Activated CD8-positive, alpha-beta T cell treated with anti-CD3 and anti-CD28 coated beads, Interleukin-2, amount 10 ng/mL, durations not matched to agents 7 days and 5 days (primary cell): ENCODE measurements at regions of chr3 and their contacts with region 1.

Region 1: GRCh38 chr3:46629551-46630517 is 17.5 kb downstream of the FAM240A start:
- DNase-seq: peak; percentile 85
- ATAC-seq: peak; percentile 100
- H3K4me3 Mint-ChIP-seq: peak overlapping the region; percentile 37
- H3K27ac Mint-ChIP-seq: no peak overlapping the region
- H3K4me1 Mint-ChIP-seq: peaks cover 17% of the 10 kb centered on the region
- H3K27me3 Mint-ChIP-seq: peaks cover 3% of the 10 kb centered on the region

Region 2: DNA sequence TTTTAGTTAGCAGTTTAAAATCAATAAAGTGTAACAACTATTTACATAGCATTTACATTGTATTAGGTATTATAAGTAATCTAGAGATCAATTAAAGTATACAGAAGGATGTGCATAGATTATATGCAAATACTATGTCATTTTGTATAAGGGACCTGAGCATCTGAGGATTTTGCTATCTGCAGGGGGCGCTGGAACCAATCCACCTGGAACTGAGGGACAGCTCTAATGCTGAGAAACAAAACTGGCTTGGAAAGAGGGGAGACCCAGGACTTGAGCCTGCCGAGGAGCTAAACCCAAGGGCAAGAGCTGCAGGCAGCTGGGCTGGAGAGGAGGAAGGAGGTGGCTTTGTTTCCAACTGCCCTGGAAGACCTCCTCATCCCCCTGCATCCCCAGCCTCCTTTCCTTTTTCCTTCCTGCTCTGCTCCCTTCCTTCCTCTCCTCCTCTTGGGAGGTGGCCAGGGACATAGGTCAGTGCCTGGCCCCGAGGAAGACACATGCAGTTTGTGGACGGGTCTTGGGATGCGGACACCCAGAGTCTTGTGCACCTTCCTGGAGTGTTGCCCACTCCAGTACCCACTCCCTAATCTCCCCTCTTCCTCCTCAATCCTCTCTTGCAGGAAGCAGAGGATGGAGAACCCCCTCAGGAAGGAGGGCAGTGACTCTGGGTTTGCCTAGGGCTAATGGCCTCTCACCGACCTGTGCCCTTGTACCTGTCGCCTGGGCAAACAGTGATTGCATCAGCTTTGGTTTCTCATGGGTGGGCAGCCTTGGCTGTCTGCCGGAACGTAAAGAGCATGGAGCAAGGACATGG is 132.9 kb before region 1 on chr3:
- CTCF ChIA-PET with region 1: interaction called, 18 read pairs
- POLR2A ChIA-PET with region 1: no interaction called
- DNase-seq: peak; percentile 64
- ATAC-seq: no peak
- H3K4me3 Mint-ChIP-seq: no peak overlapping the region
- H3K27ac Mint-ChIP-seq: no peak overlapping the region
- H3K4me1 Mint-ChIP-seq: peaks cover 2% of the 10 kb centered on the region
- H3K27me3 Mint-ChIP-seq: no peaks in the 10 kb centered on the region

Region 3: GRCh38 chr3:46527239-46527638 is 102.6 kb before region 1 on chr3:
- CTCF ChIA-PET with region 1: interaction called, 10 read pairs
- POLR2A ChIA-PET with region 1: no interaction called
- DNase-seq: no peak
- ATAC-seq: no peak
- H3K4me3 Mint-ChIP-seq: no peak overlapping the region
- H3K27ac Mint-ChIP-seq: no peak overlapping the region
- H3K4me1 Mint-ChIP-seq: no peaks in the 10 kb centered on the region
- H3K27me3 Mint-ChIP-seq: peaks cover 18% of the 10 kb centered on the region

Region 4: GRCh38 chr3:46538803-46539442 is 90.9 kb before region 1 on chr3:
- CTCF ChIA-PET with region 1: interaction called, 17 read pairs
- POLR2A ChIA-PET with region 1: no interaction called
- DNase-seq: peak; percentile 93
- ATAC-seq: peak; percentile 97
- H3K4me3 Mint-ChIP-seq: peak overlapping the region; percentile 66
- H3K27ac Mint-ChIP-seq: peak overlapping the region; percentile 89
- H3K4me1 Mint-ChIP-seq: peaks cover 61% of the 10 kb centered on the region
- H3K27me3 Mint-ChIP-seq: peaks cover 11% of the 10 kb centered on the region

Region 5: DNA sequence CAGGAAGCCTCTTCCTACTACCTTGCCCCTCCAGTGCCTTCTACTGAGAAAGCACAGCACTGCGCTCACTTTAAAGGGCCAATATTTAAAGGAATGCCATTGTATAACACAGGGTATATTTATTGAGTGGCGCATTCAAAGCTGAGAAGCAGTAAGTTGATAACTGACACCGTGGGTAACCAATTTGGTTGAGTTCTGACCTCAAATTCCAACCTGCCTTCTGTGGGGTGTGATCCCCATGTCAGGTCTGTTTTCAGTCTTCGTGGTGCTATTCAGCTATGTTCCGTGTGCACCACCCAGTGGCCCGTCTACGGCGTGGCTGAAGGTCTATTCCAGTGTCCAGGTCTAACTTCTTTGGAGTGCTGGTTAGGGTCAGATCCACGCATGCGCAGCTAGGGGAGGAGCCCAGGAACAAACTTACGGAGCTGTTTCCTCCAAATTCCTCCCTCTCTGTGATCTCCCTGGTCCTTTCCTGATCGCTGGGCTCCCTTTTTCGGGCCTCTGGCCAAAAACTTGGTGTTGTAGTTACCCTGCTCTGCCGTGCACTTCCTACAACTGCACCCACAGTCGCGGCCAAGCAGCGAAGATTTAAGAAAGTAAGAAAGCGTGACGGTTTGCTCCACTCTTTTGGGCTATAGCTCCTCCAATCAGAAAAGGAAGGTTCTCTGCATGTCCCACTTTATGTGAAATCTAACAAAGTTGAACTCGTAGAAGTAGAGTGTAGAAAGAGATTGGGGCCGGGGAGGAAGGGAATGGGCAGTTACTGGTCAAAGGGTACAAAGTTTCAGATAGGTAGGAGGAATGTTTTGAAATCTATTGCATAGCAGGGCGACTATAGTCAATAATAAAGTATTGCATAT is 71.4 kb before region 1 on chr3:
- CTCF ChIA-PET with region 1: interaction called, 21 read pairs
- POLR2A ChIA-PET with region 1: no interaction called
- DNase-seq: peak; percentile 84
- ATAC-seq: peak; percentile 100
- H3K4me3 Mint-ChIP-seq: peak overlapping the region; percentile 77
- H3K27ac Mint-ChIP-seq: peak overlapping the region; percentile 63
- H3K4me1 Mint-ChIP-seq: peaks cover 26% of the 10 kb centered on the region
- H3K27me3 Mint-ChIP-seq: peaks cover 44% of the 10 kb centered on the region

Region 6: DNA sequence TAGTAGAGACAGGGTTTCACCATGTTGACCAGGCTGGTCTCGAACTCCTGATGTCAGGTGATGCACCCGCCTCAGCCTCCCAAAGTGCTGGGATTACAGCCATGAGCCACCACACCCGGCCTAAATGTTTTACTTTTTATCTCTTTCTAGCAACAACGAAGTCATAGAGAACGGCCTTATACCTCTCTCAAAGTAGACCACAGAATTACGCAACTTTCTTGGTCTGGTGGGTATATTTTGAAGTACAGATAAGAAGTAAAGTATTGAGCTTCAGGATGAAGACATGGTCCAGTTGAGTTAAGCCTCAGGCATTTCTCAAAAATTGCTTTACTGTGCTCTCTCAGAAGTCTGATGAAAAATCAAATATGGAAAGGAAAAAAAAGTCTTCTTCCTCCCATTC is 13.1 kb after region 1 on chr3:
- CTCF ChIA-PET with region 1: interaction called, 17 read pairs
- POLR2A ChIA-PET with region 1: no interaction called
- DNase-seq: no peak
- ATAC-seq: no peak
- H3K4me3 Mint-ChIP-seq: no peak overlapping the region
- H3K27ac Mint-ChIP-seq: no peak overlapping the region
- H3K4me1 Mint-ChIP-seq: no peaks in the 10 kb centered on the region
- H3K27me3 Mint-ChIP-seq: peaks cover 39% of the 10 kb centered on the region

Region 7: GRCh38 chr3:46705022-46705530 is 75.2 kb after region 1 on chr3:
- CTCF ChIA-PET with region 1: no interaction called
- POLR2A ChIA-PET with region 1: no interaction called
- DNase-seq: peak; percentile 78
- ATAC-seq: peak; percentile 80
- H3K4me3 Mint-ChIP-seq: no peak overlapping the region
- H3K27ac Mint-ChIP-seq: no peak overlapping the region
- H3K4me1 Mint-ChIP-seq: no peaks in the 10 kb centered on the region
- H3K27me3 Mint-ChIP-seq: peaks cover 27% of the 10 kb centered on the region